Activated CD4-positive, alpha-beta T cell treated with anti-CD3 and anti-CD28 coated beads, Interleukin-2, amount 10 ng/mL, durations not matched to agents 24 days and 14 days (primary cell): ENCODE measurements at regions of chr15 and their contacts with region 1.

Region 1: GRCh38 chr15:45714590-45715488 is 80.0 kb downstream of the SQOR start:
- DNase-seq: peak; percentile 83
- H3K4me3 Mint-ChIP-seq: no peak overlapping the region
- H3K27ac Mint-ChIP-seq: no peak overlapping the region
- H3K4me1 Mint-ChIP-seq: no peaks in the 10 kb centered on the region
- H3K27me3 Mint-ChIP-seq: peaks cover 17% of the 10 kb centered on the region

Region 2: GRCh38 chr15:45790325-45790943 is 75.6 kb after region 1 on chr15:
- intact Hi-C with region 1: loop called (anchors 5 kb)
- DNase-seq: peak; percentile 60
- H3K4me3 Mint-ChIP-seq: no peak overlapping the region
- H3K27ac Mint-ChIP-seq: no peak overlapping the region
- H3K4me1 Mint-ChIP-seq: no peaks in the 10 kb centered on the region
- H3K27me3 Mint-ChIP-seq: peaks cover 4% of the 10 kb centered on the region